ENCODE measurements at regions of chr10 and their contacts with region 1.

Region 1: GRCh38 chr10:74826142-74827044 is at the start of gene KAT6B:
- DNase-seq: peak; percentile 100
- H3K4me3 Mint-ChIP-seq: peak within 1 kb of the TSS; percentile 88
- H3K27ac Mint-ChIP-seq: peak within 1 kb of the TSS; percentile 95
- H3K4me1 Mint-ChIP-seq: peaks cover 49% of the 10 kb centered on the region
- H3K27me3 Mint-ChIP-seq: no peaks in the 10 kb centered on the region
- total RNA-seq, gene KAT6B: 24.6 and 26.9 TPM in 2 replicates

Region 2: DNA sequence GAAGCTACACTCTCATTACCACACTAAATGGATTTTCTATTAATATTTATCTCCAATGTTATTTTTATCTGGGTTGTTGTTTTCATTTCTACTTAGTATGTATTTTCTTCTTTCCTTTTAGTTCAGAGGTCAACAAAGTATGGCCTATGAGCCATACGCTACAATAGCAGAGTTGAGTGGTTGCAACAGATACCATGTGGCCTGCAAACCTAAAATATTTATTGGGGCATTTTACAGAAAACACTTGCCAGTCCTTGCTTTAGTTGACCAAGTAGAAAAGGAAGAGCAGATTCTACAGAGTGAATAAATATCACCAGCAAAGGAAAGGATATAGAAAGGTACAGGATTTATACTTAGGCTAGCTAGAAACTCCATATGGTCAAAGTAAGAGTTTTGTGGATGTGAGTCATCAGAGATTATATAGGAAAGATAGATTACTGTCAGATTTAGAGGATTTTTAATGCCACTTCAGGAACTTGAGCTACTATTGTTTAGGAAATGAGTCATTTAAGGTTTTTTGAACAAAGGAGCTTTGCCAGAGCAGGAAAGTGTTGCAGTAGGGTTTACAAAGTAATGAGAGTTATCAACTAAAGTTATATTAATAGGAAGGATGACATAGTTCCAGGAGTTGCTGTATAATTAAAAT is 323.3 kb before region 1 on chr10:
- intact Hi-C with region 1: loop called (anchors 1 kb)
- DNase-seq: no peak
- H3K4me3 Mint-ChIP-seq: no peak overlapping the region
- H3K27ac Mint-ChIP-seq: peak overlapping the region; percentile 9
- H3K4me1 Mint-ChIP-seq: peaks cover 40% of the 10 kb centered on the region
- H3K27me3 Mint-ChIP-seq: no peaks in the 10 kb centered on the region

Region 3: GRCh38 chr10:74799721-74800221 is 26.6 kb before region 1 on chr10:
- intact Hi-C with region 1: loop called (anchors 1 kb)
- DNase-seq: peak; percentile 2
- H3K4me3 Mint-ChIP-seq: peak overlapping the region; percentile 3
- H3K27ac Mint-ChIP-seq: peak overlapping the region; percentile 61
- H3K4me1 Mint-ChIP-seq: peaks cover 13% of the 10 kb centered on the region
- H3K27me3 Mint-ChIP-seq: no peaks in the 10 kb centered on the region

Region 4: GRCh38 chr10:74887614-74888284 is 61.4 kb after region 1 on chr10:
- intact Hi-C with region 1: no loop called
- DNase-seq: no peak
- H3K4me3 Mint-ChIP-seq: no peak overlapping the region
- H3K27ac Mint-ChIP-seq: no peak overlapping the region
- H3K4me1 Mint-ChIP-seq: peaks cover 21% of the 10 kb centered on the region
- H3K27me3 Mint-ChIP-seq: peaks cover 2% of the 10 kb centered on the region

Region 5: DNA sequence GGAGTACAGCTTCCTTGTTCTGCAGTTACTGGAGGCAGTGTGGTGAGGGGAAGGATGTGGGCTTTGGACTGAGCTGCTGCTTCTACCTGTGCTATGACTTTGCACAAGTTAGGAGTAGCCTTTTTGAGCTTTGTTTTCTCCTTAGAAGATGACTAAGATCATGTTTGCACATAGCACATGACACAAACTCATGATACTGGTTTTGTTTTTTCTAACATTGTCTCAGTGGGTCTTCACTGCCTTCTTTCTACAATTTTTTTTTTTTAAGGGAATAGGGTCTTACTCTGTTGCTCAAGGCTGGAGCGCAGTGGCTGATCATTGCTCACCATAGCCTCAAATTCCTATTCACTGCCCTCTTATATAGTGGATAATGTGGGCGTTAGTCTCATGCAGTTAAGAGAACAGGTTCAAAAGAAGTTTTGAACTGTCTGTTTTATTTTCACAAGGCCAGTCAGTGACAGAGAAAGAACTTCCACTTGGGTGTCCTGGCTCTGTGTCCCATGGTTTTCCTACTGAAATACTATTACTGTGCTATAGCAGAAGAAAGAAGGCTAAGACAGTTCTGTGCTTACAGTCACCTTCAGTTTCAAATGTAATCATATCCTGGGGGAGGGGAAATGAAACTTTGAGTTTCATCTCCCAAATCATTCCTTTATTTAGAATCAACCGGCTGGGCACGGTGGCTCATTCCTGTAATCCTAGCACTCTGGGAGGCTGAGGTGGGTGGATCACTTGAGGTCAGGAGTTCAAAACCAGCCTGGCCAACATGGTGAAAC is 72.0 kb after region 1 on chr10:
- intact Hi-C with region 1: loop called (anchors 1 kb)
- DNase-seq: peak; percentile 21
- H3K4me3 Mint-ChIP-seq: peak overlapping the region; percentile 20
- H3K27ac Mint-ChIP-seq: peak overlapping the region; percentile 73
- H3K4me1 Mint-ChIP-seq: peaks cover 57% of the 10 kb centered on the region
- H3K27me3 Mint-ChIP-seq: no peaks in the 10 kb centered on the region

Region 6: DNA sequence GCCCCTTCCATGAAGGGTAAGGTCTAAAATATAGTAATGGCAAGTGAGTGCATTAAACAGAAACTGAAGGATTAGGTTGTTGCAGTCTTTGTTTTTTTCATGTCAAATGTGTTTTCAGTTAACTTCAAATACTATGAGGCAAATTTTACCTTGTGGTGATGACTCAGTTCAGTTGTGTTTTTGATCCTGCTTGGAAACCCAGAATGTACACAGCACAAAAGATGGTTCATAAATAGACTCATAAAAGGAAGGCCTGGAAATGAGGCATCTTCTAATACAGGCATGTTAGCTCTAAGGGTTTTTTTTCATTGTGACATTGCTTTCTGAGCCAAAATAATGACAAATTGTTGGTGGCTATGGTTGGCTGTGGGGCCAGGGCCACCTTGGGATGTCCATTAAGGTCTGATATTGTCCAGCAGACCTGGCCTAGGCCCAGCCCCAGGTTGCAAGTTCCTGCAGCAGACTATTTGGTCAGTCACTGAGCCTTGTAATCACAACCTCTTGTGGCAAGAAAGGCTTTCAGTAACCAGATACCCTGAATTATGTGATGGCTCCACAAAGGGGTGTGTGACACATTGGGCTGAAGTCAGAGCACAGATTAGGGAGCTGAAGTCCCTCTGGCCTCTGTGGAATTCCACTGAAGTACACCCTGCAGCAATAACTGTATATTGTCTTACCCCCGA is 216.0 kb after region 1 on chr10:
- intact Hi-C with region 1: loop called (anchors 2 kb)
- DNase-seq: no peak
- H3K4me3 Mint-ChIP-seq: peak overlapping the region; percentile 19
- H3K27ac Mint-ChIP-seq: peak overlapping the region; percentile 91
- H3K4me1 Mint-ChIP-seq: peaks cover 41% of the 10 kb centered on the region
- H3K27me3 Mint-ChIP-seq: no peaks in the 10 kb centered on the region

Region 7: GRCh38 chr10:75235375-75236177 is 409.2 kb after region 1 on chr10 and contains the start of gene COMTD1:
- intact Hi-C with region 1: loop called (anchors 1 kb)
- DNase-seq: peak; percentile 91
- H3K4me3 Mint-ChIP-seq: peak within 1 kb of the TSS; percentile 84
- H3K27ac Mint-ChIP-seq: peak within 1 kb of the TSS; percentile 93
- H3K4me1 Mint-ChIP-seq: peaks cover 27% of the 10 kb centered on the region
- H3K27me3 Mint-ChIP-seq: no peaks in the 10 kb centered on the region
- total RNA-seq, gene COMTD1: 36.4 and 36.9 TPM in 2 replicates

Region 8: DNA sequence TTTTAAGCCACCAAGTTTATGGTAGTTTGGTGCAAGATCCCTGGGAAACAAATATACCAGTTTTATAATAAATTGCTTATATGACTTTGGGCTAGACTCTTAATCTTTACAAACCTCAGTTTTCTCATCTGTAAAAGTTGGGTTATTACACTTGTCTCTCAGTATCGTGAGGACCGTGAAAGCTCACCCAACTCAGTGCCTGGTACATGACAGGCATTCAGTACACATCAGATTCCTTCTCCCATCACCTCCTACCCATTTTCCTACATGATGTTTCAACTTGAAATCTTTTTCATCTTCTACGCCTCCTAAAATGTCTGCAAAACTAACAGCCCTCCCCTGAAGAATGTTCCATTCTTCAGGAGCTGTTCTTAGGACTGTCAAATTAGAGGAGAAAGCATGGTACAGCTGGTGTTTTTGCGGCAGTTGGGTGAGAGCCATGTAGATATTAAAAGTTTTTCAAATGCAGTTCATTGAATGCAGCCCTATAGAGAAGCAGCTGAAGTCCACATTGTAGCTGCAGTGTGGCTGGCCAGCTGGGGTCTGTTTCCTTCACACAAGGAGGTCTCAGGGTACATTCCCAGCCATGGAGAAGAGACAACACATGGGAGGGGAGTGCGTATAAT is 1417.8 kb after region 1 on chr10:
- intact Hi-C with region 1: no loop called
- DNase-seq: no peak
- H3K4me3 Mint-ChIP-seq: no peak overlapping the region
- H3K27ac Mint-ChIP-seq: no peak overlapping the region
- H3K4me1 Mint-ChIP-seq: no peaks in the 10 kb centered on the region
- H3K27me3 Mint-ChIP-seq: no peaks in the 10 kb centered on the region